ENCODE measurements at regions of chr10 and their contacts with region 1.

Region 1: GRCh38 chr10:178208-178607 is 43.0 kb downstream of the ZMYND11 start:
- DNase-seq: no peak
- H3K4me3 Mint-ChIP-seq: no peak overlapping the region
- H3K27ac Mint-ChIP-seq: no peak overlapping the region
- H3K4me1 Mint-ChIP-seq: peaks cover 21% of the 10 kb centered on the region
- H3K27me3 Mint-ChIP-seq: no peaks in the 10 kb centered on the region

Region 2: DNA sequence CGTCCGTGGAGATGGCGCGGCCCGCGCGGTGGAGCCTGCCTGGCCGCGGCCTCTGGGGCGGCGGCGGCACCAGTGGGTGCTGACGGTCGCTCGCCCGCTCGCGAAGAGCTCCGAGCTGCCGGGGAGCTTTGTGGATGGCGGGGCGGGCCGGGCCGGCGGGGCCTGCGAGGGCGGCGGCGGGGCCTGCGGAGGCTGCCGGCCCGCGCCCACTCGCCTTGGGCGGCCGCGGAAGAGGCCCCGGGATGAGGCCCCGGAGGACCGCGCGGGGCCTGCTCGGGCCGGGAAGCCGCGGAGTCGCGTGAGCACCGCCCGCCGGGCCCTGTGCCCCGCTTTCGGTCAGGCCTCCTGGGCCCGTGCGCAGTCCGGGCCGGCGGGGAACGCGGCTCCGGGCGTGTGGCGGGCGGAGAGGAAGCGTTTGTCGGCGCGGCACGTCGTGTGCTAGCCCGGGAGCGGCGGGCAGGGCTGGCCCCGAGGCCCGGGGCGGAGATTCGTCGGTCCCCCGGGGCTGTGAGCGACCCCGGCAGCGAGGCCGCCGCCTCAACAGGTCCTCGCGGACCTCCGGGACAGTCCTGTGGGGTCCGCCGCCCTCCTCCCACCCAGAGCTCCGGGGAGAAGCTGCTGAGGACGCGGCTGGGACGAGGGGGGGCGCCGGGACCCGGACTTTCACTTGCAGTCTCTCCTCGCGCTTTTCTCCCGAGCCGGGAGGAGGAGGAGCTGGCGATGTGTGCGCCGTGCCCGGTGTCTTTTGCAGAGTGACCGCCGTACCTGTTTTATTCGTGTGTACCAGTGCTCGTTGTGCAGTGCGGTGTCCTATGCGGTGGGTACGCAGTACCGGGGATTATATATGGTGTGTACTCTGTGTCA is 42.4 kb before region 1 on chr10:
- CTCF ChIA-PET with region 1: no interaction called
- intact Hi-C with region 1: loop called (anchors 2 kb)
- DNase-seq: peak; percentile 72
- H3K4me3 Mint-ChIP-seq: peak overlapping the region; percentile 79
- H3K27ac Mint-ChIP-seq: peak overlapping the region; percentile 89
- H3K4me1 Mint-ChIP-seq: peaks cover 31% of the 10 kb centered on the region
- H3K27me3 Mint-ChIP-seq: no peaks in the 10 kb centered on the region

Region 3: DNA sequence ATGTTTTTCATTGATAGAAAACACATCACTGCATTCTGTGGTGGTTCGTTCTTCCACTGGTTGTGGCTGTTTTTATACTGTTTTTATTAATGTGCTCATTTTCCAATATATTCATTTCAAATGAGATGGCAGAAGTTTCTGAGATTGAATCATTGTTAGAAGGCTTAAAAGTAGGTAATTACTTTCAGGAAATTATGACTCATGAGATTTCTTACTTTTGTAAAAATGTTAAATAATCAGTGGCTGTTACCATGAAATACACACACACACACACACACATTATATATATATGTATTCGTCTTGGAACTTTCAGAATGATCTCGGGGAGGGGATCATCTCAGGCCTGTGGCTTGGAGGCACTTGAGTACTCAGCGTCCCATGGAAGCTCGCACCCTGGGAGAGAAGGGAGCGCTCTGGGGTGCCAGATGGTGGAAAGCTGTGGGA is 23.1 kb after region 1 on chr10:
- CTCF ChIA-PET with region 1: no interaction called
- intact Hi-C with region 1: loop called (anchors 2 kb)
- DNase-seq: no peak
- H3K4me3 Mint-ChIP-seq: no peak overlapping the region
- H3K27ac Mint-ChIP-seq: peak overlapping the region; percentile 18
- H3K4me1 Mint-ChIP-seq: peaks cover 17% of the 10 kb centered on the region
- H3K27me3 Mint-ChIP-seq: no peaks in the 10 kb centered on the region

Region 4: GRCh38 chr10:209361-209760 is 31.2 kb after region 1 on chr10:
- CTCF ChIA-PET with region 1: no interaction called
- intact Hi-C with region 1: loop called (anchors 2 kb)
- DNase-seq: no peak
- H3K4me3 Mint-ChIP-seq: no peak overlapping the region
- H3K27ac Mint-ChIP-seq: no peak overlapping the region
- H3K4me1 Mint-ChIP-seq: peaks cover 3% of the 10 kb centered on the region
- H3K27me3 Mint-ChIP-seq: no peaks in the 10 kb centered on the region

Region 5: GRCh38 chr10:227014-227413 is 48.8 kb after region 1 on chr10:
- CTCF ChIA-PET with region 1: interaction called, 3 read pairs
- intact Hi-C with region 1: loop called (anchors 5 kb)
- DNase-seq: no peak
- H3K4me3 Mint-ChIP-seq: no peak overlapping the region
- H3K27ac Mint-ChIP-seq: no peak overlapping the region
- H3K4me1 Mint-ChIP-seq: peaks cover 8% of the 10 kb centered on the region
- H3K27me3 Mint-ChIP-seq: no peaks in the 10 kb centered on the region

Region 6: DNA sequence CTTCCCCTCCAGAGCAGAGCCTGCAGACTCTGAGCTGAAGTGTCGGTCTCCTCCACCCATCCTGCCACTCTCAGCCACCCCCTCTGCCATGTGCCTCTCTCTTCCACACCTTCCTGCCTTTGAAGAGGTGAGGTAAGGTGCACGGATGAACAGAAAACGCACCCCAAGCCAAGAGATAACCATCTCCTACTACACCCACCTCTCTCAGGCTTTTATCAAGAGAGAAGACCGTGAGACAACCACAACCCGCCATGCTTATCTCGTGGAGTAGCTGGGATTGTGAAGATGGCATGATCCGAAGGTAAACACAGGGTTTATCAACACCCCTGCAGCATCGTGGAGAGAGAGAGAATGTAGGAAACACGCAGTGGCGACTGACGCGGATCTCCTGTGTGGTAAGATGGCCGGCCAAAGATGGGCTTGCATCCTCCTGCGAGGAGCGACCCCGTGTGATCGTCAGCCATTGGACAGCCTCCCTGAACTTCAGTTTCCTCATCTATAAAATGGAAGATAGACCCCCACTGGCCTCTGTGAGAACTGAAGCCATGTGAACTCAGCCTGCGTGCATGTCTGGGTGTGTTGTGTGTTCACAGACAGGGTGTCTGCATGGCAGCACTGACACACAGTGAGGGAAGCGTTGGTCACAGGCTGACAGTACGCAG is 292.3 kb after region 1 on chr10:
- CTCF ChIA-PET with region 1: no interaction called
- intact Hi-C with region 1: loop called (anchors 1 kb)
- DNase-seq: peak; percentile 68
- H3K4me3 Mint-ChIP-seq: peak overlapping the region; percentile 58
- H3K27ac Mint-ChIP-seq: peak overlapping the region; percentile 10
- H3K4me1 Mint-ChIP-seq: peaks cover 22% of the 10 kb centered on the region
- H3K27me3 Mint-ChIP-seq: no peaks in the 10 kb centered on the region

Measured in activated naive CD4-positive, alpha-beta T cell treated with anti-CD3 and anti-CD28 coated beads for 36 hours (primary cell).